ENCODE measurements at regions of chr1 and their contacts with region 1.

Region 1: GRCh38 chr1:164659621-164660411 is 100.8 kb downstream of the PBX1 start:
- DNase-seq: no peak
- H3K4me3 ChIP-seq: no peak overlapping the region
- CTCF ChIP-seq: no peak

Region 2: DNA sequence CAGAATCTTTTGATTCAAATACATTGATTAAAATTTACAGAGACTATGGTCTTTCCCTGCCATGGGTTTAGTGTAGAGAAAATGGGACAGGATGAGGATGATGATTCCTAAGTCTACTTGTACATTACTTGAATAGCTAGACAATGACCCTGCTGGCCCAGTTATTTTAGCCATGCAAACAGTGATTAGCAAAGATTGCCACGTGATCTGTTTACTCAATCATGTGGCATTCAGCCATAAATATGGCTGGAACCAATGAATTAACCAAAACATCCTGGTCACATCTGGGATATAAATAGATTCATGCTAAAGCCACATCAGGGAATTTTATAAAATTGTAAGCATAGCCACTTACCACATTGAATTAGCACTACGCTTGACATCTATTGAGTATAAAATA is 66.4 kb after region 1 on chr1:
- in situ Hi-C with region 1: loop called (anchors 5 kb)
- DNase-seq: peak; percentile 73
- H3K4me3 ChIP-seq: no peak overlapping the region
- CTCF ChIP-seq: no peak